Adrenal gland (tissue), 19 donors: ENCODE measurements at regions of chr2 and their contacts with region 1.

Region 1: DNA sequence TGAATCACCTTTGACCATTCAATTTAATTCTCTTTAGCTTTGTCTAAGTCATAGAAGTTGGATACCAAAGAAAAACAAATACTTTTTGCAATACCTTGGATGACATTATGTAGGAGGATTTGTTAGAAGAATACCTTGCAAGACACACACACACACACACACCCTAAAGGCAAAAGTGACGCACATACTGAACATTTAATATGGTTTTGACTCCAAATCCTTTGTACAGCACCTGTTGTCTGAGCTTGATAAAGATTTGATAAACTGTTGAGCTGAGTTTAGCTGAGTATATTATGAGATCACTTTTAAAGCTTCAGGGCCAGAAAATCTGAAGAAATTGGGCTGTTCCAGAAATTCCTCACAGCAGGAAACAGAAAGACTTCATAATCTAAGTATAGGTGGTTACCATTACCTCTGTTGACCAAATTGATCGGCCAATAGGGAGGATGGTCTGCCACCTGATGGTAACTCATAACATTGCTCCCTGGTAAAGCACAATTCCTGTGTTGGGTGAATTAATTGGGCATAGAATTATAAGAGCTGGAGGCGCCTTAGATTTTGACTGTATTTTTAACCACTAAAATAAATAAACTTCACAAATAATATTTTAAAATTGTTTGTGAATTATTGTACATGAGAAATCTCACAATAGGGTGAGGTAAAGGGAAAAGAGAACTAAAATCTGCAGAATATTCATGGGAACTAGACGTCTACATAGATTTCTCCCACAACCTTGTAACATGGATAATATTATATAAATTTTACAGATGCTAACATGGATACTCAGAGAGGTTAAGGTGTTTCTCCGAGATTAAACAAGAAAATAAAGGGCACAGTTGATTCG is 21.9 kb upstream of the RPIA start:
- DNase-seq: peak in 6 of 7 donors; percentile 28 to 67 (median 42)
- H3K4me3 ChIP-seq: no peak overlapping the region
- H3K27ac ChIP-seq: no peak overlapping the region
- H3K4me1 ChIP-seq: no peaks in the 10 kb centered on the region
- H3K27me3 ChIP-seq: no peaks in the 10 kb centered on the region
- CTCF ChIP-seq: peak; percentile 42 to 77 (median 68)
- POLR2A ChIP-seq: no peak

Region 2: GRCh38 chr2:88187038-88187676 is 482.4 kb before region 1 on chr2:
- intact Hi-C with region 1: loop called in 1 of 2 experiments (anchors 10 kb)
- DNase-seq: peak; percentile 42 to 72 (median 63)
- H3K4me3 ChIP-seq: no peak overlapping the region
- H3K27ac ChIP-seq: no peak overlapping the region
- H3K4me1 ChIP-seq: no peaks in the 10 kb centered on the region
- H3K27me3 ChIP-seq: no peaks in the 10 kb centered on the region
- CTCF ChIP-seq: peak; percentile 30 to 62 (median 50)
- POLR2A ChIP-seq: no peak

Region 3: DNA sequence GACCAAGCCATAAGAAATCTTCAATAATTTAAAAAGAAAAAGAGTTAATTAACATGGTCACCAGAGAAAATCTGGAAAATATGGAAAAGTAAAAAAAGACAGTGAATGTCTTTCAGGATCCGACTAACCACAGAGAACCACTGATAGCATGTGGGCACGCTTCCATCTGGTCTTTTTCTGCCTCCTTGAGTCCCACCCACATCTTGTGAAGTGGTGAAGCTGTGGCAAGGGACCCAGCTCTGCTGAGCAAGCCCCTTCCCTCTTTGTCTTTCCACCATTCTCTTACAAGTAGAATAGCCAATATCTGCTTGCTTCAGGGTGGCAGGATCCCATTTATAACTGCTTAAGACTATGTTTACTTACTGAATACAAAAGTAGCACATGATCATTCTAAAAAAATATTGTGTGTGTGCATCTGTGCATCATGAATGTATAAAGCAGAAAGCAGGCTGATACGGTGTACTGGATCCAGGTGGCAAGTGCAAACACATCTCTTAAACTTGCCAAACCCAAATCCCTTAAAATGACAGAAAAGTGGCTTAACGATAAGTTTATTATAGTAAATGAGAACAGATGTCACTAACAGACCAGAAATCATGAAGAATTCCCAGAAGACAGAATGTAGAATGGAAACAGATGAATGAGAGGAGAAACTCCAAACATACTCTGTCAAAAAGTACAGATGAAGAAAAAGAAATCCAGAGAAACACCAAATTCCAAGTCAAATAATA is 269.4 kb before region 1 on chr2:
- intact Hi-C with region 1: no loop called
- DNase-seq: no peak
- H3K4me3 ChIP-seq: no peak overlapping the region
- H3K27ac ChIP-seq: no peak overlapping the region
- H3K4me1 ChIP-seq: no peaks in the 10 kb centered on the region
- H3K27me3 ChIP-seq: no peaks in the 10 kb centered on the region
- CTCF ChIP-seq: no peak
- POLR2A ChIP-seq: no peak

Region 4: DNA sequence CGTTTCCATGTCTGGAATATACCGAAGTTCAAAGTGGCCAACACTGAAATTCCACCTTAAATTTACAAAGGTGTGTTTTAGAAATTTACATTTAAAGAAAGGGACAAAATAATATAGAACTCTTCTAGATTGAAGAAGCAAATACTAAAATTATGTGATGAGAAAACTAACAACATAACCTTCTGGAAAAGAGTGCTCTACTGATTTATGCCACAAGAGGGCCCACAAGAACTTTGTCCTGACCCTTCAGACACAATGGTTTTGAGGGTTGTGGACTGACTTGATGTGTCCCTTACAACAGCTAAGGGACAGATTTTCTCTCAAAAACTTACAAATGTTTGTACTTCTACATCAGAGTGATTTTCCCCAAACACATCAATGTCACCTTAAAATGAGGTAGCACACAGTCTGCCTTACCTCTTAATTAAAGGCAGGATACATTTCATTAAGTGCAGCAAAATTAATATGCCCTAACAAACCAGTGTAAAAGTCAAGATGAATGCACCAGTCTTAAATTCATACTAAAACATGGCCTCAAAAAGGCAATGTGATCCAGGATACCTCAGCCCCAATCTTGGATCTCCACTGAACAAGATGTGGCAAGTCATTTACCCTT is 78.5 kb before region 1 on chr2:
- intact Hi-C with region 1: loop called (anchors 2 to 5 kb)
- DNase-seq: peak; percentile 31 to 74 (median 63)
- H3K4me3 ChIP-seq: no peak overlapping the region
- H3K27ac ChIP-seq: no peak overlapping the region
- H3K4me1 ChIP-seq: no peaks in the 10 kb centered on the region
- H3K27me3 ChIP-seq: no peaks in the 10 kb centered on the region
- CTCF ChIP-seq: peak; percentile 78 to 87 (median 80)
- POLR2A ChIP-seq: no peak

Region 5: DNA sequence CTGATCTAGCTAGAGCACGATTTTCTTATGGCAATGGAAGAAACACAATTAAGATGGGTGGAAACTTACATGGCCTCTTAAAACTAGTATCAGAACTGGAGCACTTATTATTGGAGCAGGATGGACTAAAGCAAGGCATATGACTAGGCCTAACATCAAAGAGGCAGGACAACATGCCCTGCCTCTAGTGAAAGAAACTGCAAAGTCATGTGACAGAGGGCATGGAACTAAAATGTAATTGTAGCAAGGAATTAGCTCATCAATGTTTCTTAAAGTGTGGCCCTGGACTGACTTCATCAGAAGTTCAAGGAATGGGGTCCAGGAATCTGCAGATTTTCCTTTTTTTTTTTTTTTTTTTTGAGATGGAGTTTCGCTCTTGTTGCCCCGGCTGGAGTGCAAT is 37.0 kb before region 1 on chr2:
- intact Hi-C with region 1: loop called in 1 of 2 experiments (anchors 5 kb)
- DNase-seq: no peak
- H3K4me3 ChIP-seq: no peak overlapping the region
- H3K27ac ChIP-seq: no peak overlapping the region
- H3K4me1 ChIP-seq: peaks cover 0 to 4% of the 10 kb centered on the region in 2 donors
- H3K27me3 ChIP-seq: no peaks in the 10 kb centered on the region
- CTCF ChIP-seq: no peak
- POLR2A ChIP-seq: no peak

Region 6: DNA sequence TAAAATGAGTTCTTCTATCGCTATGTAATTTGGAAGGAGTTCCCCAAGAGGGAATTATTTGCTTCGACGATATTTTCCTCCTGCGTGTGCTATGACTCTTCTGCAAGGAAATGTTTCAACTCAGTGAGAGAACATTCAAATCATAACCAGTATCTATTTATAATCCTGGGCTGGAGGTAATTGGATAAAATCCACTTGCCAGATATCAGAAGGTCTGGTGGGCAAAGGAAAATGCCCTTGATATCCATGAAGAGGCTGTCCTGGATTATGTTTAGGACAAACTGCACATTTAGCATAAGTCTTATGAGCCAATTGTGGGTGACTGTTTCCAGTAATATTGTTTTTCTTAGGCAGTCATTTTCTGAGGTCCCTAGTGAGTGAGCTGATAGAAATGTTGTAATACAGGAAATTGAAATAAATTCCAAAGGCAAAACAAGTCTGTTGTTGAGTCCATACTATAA is 39.6 kb after region 1 on chr2:
- intact Hi-C with region 1: no loop called
- DNase-seq: no peak
- H3K4me3 ChIP-seq: no peak overlapping the region
- H3K27ac ChIP-seq: no peak overlapping the region
- H3K4me1 ChIP-seq: no peaks in the 10 kb centered on the region
- H3K27me3 ChIP-seq: no peaks in the 10 kb centered on the region
- CTCF ChIP-seq: no peak
- POLR2A ChIP-seq: no peak

Region 7: DNA sequence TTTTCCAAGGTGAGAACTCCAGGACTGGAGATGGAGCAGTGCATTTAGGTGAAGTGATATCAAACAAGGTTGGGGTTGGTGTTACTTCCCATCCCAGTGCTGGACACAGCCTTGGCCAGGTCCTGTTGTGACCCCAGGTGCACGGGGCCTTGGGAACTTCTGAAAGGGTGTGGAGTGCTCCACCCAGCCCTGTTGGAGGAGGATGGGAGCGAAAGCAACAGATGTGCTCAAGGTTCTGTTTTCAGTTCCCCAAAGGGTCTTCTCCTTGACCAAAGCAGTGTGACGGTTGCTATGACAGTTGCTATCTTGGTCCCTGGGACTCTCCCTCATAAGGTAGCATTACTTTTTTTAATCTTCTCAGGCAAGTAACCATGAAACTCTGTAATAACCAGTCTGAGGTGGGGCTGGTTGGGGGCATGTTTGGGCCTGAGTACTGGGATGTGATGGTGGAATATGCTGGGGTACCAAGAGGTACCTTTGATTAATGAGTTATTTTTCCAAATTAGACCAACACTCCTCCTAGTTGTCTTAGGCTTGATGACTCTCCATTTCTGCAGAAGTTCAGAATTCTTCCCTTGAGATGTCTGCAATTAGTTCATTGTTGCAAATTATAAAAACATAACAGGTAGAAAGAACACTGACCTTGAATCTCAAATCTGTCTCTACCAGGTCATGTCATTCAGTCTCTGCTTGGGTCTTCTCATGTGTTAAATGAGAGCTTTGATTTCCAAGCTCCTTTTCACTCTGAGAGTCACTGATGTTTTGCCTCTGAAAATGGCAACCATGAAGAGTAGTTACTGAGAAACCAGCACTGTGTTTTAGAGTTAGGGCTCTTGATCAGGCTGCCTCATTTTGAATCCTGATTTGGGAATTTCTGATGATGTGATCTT is 176.4 kb after region 1 on chr2:
- intact Hi-C with region 1: no loop called
- DNase-seq: no peak
- H3K4me3 ChIP-seq: no peak overlapping the region
- H3K27ac ChIP-seq: no peak overlapping the region
- H3K4me1 ChIP-seq: no peaks in the 10 kb centered on the region
- H3K27me3 ChIP-seq: no peaks in the 10 kb centered on the region
- CTCF ChIP-seq: no peak
- POLR2A ChIP-seq: no peak